HCT116 (cell line): ENCODE measurements at regions of chr12 and their contacts with region 1.

Region 1: DNA sequence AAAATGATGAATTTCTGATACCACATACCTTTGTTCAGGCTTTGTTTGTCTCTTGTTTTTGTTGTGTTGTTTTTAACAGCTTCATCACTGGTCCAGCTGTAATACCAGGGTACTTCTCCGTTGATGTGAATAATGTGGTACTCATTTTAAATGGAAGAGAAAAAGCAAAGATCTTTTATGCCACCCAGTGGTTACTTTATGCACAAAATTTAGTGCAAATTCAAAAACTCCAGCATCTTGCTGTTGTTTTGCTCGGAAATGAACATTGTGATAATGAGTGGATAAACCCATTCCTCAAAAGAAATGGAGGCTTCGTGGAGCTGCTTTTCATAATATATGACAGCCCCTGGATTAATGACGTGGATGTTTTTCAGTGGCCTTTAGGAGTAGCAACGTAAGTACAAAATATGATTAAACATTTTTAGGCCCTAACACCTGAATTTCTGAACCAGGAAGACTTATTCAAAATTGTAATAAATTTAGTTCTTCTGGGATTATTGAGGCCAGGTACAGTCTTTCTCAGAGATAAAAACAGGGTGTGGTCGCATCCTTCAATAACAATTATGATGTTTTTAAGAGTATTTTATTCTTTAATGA is 22.4 kb downstream of the RXYLT1 start:
- DNase-seq: no peak
- ATAC-seq: no peak
- H3K4me3 ChIP-seq: no peak overlapping the region
- H3K27ac ChIP-seq: no peak overlapping the region
- H3K4me1 ChIP-seq: no peaks in the 10 kb centered on the region
- H3K27me3 ChIP-seq: no peaks in the 10 kb centered on the region
- CTCF ChIP-seq: peak; percentile 48 to 63 (median 57); a peak in 5 of 6 replicates
- POLR2A ChIP-seq: no peak
- RAD21 ChIP-seq: peak; percentile 79

Region 2: GRCh38 chr12:63420206-63420644 is 381.9 kb before region 1 on chr12:
- CTCF ChIA-PET with region 1: no interaction called
- POLR2A ChIA-PET with region 1: no interaction called
- RAD21 ChIA-PET with region 1: no interaction called
- intact Hi-C with region 1: loop called (anchors 10 kb)
- DNase-seq: peak; percentile 73
- ATAC-seq: peak; percentile 91
- H3K4me3 ChIP-seq: no peak overlapping the region
- H3K27ac ChIP-seq: no peak overlapping the region
- H3K4me1 ChIP-seq: peaks cover 0 to 19% of the 10 kb centered on the region in 2 experiments; a peak in 2 of 4 replicates
- H3K27me3 ChIP-seq: no peaks in the 10 kb centered on the region
- CTCF ChIP-seq: peak; percentile 43 to 76 (median 64); a peak in 5 of 6 replicates
- POLR2A ChIP-seq: no peak
- RAD21 ChIP-seq: peak; percentile 68

Region 3: DNA sequence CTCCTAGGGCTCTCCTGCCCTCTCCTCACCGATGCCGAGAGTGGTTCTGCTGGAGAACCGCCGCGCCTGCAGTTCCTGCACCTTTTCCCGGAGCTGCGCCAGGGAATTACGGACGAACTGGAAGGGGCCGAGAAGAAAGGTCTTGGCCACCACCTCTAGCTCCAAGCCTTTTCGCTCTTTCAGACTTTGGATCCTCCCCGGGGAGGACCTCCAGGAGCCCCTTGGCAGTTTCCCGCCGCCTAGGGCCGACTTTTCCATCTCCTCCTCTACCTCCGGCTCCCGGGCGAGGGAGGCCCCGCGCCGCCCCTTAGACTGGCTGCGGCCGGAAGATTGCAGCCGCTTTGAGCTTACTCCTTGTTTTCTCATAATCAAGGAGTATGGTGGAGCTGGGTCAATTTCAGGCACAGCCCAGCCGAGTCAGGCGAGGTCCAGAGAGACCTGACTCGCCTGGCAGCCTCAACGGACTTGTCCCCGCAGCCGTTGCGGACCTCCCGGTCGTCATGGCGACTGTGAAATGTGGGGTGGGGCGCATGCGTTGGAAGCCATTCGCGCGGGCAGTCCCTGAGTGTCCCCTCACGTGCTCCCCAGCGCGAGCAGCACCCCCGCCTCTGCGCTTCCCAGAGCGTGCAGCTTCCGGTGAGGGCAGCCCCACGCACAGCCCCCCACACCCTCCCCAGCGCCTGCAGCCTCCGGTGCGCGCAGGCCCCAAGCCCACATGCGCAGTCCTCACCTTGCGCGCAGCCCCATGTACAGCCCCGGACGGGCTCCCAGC is 133.9 kb before region 1 on chr12 and contains the start of gene DPY19L2:
- CTCF ChIA-PET with region 1: interaction called, 3 read pairs
- POLR2A ChIA-PET with region 1: no interaction called
- RAD21 ChIA-PET with region 1: no interaction called
- intact Hi-C with region 1: loop called (anchors 5 kb)
- DNase-seq: no peak
- ATAC-seq: no peak
- H3K4me3 ChIP-seq: no peak within 1 kb of the TSS
- H3K27ac ChIP-seq: no peak within 1 kb of the TSS
- H3K4me1 ChIP-seq: no peaks in the 10 kb centered on the region
- H3K27me3 ChIP-seq: no peaks in the 10 kb centered on the region
- CTCF ChIP-seq: no peak
- POLR2A ChIP-seq: no peak
- RAD21 ChIP-seq: no peak
- total RNA-seq, gene DPY19L2: not detected